ENCODE measurements at regions of chr11 and their contacts with region 1.

Region 1: DNA sequence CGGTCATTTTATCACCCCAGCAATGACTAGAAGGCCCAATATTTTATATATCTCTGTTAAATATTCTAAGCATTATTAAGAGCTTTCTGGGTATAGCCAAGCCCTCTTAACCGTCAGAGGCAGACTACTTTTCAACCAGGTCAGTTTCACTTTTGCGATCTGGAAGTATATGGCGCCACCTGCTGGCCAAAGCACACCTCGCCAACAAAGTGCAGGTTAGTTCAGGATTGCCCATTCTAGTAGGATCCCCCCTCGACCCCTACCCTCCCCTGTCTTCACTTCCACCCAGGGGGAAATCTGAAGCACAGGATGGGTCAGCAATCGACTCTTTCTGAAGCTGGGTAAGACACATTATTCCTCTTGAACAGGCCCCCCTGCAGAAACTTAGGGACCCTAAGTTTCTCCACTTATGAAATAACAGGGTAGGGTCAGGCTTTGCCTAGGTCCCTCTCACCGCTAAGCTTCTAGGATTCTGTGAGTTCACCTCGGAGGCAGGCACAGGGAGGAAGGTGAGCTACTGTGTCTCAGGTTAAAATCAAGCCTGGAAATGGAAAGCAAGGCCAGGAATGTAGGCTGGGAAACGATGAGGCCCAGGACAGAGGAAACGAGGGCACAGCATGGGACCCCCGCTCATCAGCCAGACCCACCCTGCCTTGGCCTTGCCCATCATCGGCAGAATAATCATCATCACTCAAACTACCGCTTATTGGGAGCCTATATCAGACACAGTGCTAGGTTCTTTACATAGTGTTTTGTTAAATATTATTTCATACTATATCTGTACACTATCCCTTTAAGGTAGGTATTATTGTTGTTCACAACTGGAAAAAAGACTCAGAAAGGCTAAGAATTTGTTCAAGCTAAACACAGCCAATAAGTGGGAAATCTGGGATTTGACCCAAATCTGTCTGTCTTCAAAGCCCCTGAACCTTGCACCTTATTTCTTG is 35.6 kb downstream of the KCNJ1 start:
- DNase-seq: peak; percentile 69
- ATAC-seq: peak; percentile 92
- H3K4me3 ChIP-seq: peak overlapping the region; percentile 28; the same call in 1 of the 2 replicates
- H3K27ac ChIP-seq: peak overlapping the region; percentile 60
- H3K4me1 ChIP-seq: peaks cover 27% of the 10 kb centered on the region
- H3K27me3 ChIP-seq: no peaks in the 10 kb centered on the region
- CTCF ChIP-seq: peak; percentile 80 to 91 (median 85); a peak in 5 of 6 replicates
- EP300 ChIP-seq: no peak
- POLR2A ChIP-seq: no peak
- RAD21 ChIP-seq: peak; percentile 93

Region 2: DNA sequence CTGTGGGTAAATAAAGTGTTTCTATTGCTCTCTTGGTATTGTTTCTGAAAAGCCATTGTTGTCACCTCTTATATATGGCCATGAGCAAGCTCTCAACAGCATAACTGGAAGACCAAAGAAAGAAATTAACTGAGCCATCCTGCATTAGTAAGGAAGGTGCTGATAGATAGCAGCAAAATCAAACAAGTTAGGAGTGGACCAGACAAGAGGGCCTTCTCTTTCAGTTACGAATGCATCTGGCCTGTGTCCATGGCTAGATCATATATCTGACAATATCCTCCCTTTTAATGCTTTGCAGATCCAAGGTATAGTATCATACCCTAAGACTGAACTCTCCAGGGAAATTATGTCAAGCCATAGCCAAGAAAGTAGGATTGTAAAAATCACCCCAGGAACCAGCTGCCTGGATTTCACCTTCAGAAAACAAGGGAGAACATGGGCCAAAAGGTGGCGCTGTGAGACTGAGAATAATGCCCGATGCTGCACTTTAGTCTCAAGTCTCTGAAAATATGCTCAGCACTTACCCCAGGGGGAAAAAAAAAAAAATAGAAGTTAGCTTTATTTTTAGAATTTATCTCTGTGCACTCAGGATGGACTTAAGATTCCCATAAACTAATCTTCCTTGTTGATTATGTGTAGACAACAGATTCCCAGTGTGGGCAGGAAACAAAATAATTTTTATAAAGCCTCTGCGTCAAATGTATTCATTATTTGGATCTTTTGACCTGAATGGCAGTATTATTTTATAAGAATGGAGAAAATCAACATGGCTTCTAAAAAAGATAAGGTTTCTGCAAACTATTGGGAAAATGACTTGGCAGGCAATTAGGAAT is 659.2 kb before region 1 on chr11:
- CTCF ChIA-PET with region 1: interaction called, 108 read pairs
- POLR2A ChIA-PET with region 1: interaction called, 3 read pairs
- RAD21 ChIA-PET with region 1: interaction called, 42 read pairs
- SMC1A ChIA-PET with region 1: interaction called, 42 read pairs
- in situ Hi-C with region 1: loop called (anchors 5 kb)
- intact Hi-C with region 1: loop called (anchors 1 kb)
- DNase-seq: peak; percentile 38
- ATAC-seq: peak; percentile 93
- H3K4me3 ChIP-seq: no peak overlapping the region
- H3K27ac ChIP-seq: no peak overlapping the region
- H3K4me1 ChIP-seq: no peaks in the 10 kb centered on the region
- H3K27me3 ChIP-seq: no peaks in the 10 kb centered on the region; a peak in 2 of 4 replicates
- CTCF ChIP-seq: peak; percentile 68 to 91 (median 72)
- EP300 ChIP-seq: no peak
- POLR2A ChIP-seq: no peak
- RAD21 ChIP-seq: peak; percentile 97

Region 3: GRCh38 chr11:128552783-128553661 is 278.4 kb before region 1 on chr11:
- CTCF ChIA-PET with region 1: interaction called, 31 read pairs
- POLR2A ChIA-PET with region 1: interaction called, 3 read pairs
- RAD21 ChIA-PET with region 1: interaction called, 16 read pairs
- SMC1A ChIA-PET with region 1: interaction called, 9 read pairs
- in situ Hi-C with region 1: no loop called
- intact Hi-C with region 1: loop called (anchors 2 kb)
- DNase-seq: peak; percentile 95
- ATAC-seq: peak; percentile 79
- H3K4me3 ChIP-seq: peak overlapping the region; percentile 69
- H3K27ac ChIP-seq: peak overlapping the region; percentile 100
- H3K4me1 ChIP-seq: peaks cover 50% of the 10 kb centered on the region
- H3K27me3 ChIP-seq: no peaks in the 10 kb centered on the region
- CTCF ChIP-seq: no peak
- EP300 ChIP-seq: peak in 1 of 2 experiments; percentile 35; a peak in 2 of 4 replicates
- POLR2A ChIP-seq: peak; percentile 82
- RAD21 ChIP-seq: 0 out of 2 replicates have a peak, but pooled peaks have one; percentile 2

Region 4: GRCh38 chr11:128624269-128625175 is 206.9 kb before region 1 on chr11:
- CTCF ChIA-PET with region 1: interaction called, 177 read pairs
- POLR2A ChIA-PET with region 1: interaction called, 3 read pairs
- RAD21 ChIA-PET with region 1: interaction called, 125 read pairs
- SMC1A ChIA-PET with region 1: interaction called, 146 read pairs
- in situ Hi-C with region 1: loop called (anchors 25 kb)
- intact Hi-C with region 1: no loop called
- DNase-seq: no peak
- ATAC-seq: peak; percentile 77
- H3K4me3 ChIP-seq: no peak overlapping the region
- H3K27ac ChIP-seq: peak overlapping the region; percentile 86
- H3K4me1 ChIP-seq: peaks cover 66% of the 10 kb centered on the region
- H3K27me3 ChIP-seq: no peaks in the 10 kb centered on the region
- CTCF ChIP-seq: no peak
- EP300 ChIP-seq: peak in 1 of 2 experiments; percentile 21; a peak in 1 of 4 replicates
- POLR2A ChIP-seq: no peak
- RAD21 ChIP-seq: no peak

Region 5: GRCh38 chr11:128733440-128734102 is 97.9 kb before region 1 on chr11:
- CTCF ChIA-PET with region 1: interaction called, 12 read pairs
- POLR2A ChIA-PET with region 1: no interaction called
- RAD21 ChIA-PET with region 1: interaction called, 15 read pairs
- SMC1A ChIA-PET with region 1: interaction called, 20 read pairs
- in situ Hi-C with region 1: no loop called
- intact Hi-C with region 1: loop called (anchors 1 kb)
- DNase-seq: no peak
- ATAC-seq: peak; percentile 55
- H3K4me3 ChIP-seq: peak overlapping the region; percentile 24; the same call in 1 of the 2 replicates
- H3K27ac ChIP-seq: peak overlapping the region; percentile 91
- H3K4me1 ChIP-seq: peaks cover 89% of the 10 kb centered on the region
- H3K27me3 ChIP-seq: no peaks in the 10 kb centered on the region
- CTCF ChIP-seq: no peak
- EP300 ChIP-seq: no peak
- POLR2A ChIP-seq: 0 out of 2 replicates have a peak, but pooled peaks have one; percentile 31
- RAD21 ChIP-seq: no peak

Region 6: DNA sequence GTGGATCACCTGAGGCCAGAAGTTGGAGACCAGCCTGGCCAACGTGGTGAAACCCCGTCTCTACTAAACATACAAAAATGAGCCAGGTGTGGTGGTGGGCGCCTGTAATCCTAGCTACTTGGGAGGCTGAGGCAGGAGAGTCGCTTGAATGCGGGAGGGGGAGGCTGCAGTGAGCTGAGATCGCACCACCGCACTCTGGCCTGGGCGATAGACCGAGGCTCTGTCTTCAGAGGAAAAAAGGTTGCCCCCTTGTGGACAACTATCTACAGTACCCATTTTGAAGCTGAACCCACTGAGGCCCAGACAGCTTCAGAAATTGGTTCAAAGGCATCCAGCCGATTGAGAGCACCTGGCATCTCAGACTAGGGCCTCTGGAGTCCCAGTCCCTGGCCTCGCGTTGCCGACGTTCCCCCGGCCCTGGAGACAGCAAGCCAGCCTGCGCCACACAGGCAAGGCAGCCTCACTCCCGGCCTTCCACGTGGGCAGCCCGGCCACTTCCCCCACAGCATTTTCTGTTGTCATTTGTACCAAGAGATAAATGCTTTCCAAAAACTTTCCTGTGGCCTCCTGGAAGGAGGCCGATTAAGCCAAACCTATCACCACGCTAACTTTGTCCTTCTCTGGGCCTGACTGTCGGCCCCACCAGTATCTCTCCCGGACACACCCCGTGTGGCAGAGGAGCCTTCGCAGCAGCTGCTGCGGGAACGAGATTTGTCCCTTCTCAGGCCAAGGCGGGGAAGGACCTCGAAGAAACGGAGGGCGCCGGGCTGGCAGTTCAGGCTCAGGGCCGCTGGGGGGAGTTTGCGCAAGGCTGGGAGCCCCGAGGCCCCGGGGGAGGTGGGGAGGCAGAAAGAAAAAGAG is 54.8 kb before region 1 on chr11:
- CTCF ChIA-PET with region 1: interaction called, 12 read pairs
- POLR2A ChIA-PET with region 1: no interaction called
- RAD21 ChIA-PET with region 1: interaction called, 9 read pairs
- SMC1A ChIA-PET with region 1: interaction called, 12 read pairs
- in situ Hi-C with region 1: no loop called
- intact Hi-C with region 1: no loop called
- DNase-seq: no peak
- ATAC-seq: peak; percentile 88
- H3K4me3 ChIP-seq: no peak overlapping the region
- H3K27ac ChIP-seq: no peak overlapping the region
- H3K4me1 ChIP-seq: no peaks in the 10 kb centered on the region
- H3K27me3 ChIP-seq: no peaks in the 10 kb centered on the region
- CTCF ChIP-seq: peak; percentile 30 to 53 (median 34); a peak in 4 of 6 replicates
- EP300 ChIP-seq: no peak
- POLR2A ChIP-seq: no peak
- RAD21 ChIP-seq: peak; percentile 28; the same call in 1 of the 2 replicates

Region 7: DNA sequence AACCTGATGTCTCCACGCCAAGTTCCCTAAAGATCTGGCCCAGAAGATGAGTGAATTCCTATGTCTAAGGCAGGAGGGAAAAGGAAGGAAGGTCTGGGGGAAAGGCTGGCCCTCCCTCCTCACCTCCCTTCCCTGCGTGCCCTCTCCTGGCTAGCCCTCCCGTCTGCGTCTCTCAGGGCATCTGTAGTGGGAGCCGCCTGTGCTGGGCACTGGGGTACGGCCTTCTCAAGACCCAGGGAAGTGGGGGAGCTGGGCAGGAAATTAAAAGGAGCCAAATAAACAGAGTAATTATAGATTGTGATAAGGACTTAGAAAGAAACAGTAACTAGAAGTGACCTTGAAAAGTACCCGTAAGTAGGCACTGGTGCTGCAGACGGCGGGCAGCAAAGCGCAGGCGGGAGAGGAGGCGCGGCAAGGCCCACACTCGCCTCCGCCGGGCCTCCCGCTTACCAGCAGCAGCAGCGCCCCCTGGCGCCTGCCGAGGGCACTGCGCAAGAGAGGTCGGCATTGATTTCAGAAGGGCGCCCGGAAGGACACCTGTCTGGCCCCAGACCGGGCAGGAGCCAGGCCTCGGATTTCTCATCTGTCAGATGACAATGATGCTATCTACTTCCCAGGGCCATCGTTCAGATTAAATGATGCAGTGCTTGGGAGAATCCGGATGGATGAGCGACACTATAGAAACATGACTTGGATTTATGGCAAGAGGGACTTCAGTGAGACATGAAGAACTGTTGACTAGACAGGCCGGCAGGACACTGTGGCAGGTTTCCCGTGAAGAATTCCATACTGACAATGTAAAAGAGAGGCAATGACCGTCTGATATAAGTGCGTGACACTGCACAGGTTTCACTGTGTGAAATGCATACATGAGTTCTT is 28.4 kb after region 1 on chr11:
- CTCF ChIA-PET with region 1: interaction called, 12 read pairs
- POLR2A ChIA-PET with region 1: no interaction called
- RAD21 ChIA-PET with region 1: interaction called, 7 read pairs
- SMC1A ChIA-PET with region 1: interaction called, 4 read pairs
- in situ Hi-C with region 1: no loop called
- intact Hi-C with region 1: no loop called
- DNase-seq: no peak
- ATAC-seq: peak; percentile 99
- H3K4me3 ChIP-seq: no peak overlapping the region
- H3K27ac ChIP-seq: no peak overlapping the region
- H3K4me1 ChIP-seq: no peaks in the 10 kb centered on the region
- H3K27me3 ChIP-seq: peaks cover 0 to 2% of the 10 kb centered on the region in 2 experiments; a peak in 1 of 4 replicates
- CTCF ChIP-seq: peak; percentile 89 to 94 (median 93); a peak in 5 of 6 replicates
- EP300 ChIP-seq: no peak
- POLR2A ChIP-seq: no peak
- RAD21 ChIP-seq: peak; percentile 71

Region 8: GRCh38 chr11:129023970-129024676 is 192.7 kb after region 1 on chr11:
- CTCF ChIA-PET with region 1: no interaction called
- POLR2A ChIA-PET with region 1: no interaction called
- RAD21 ChIA-PET with region 1: no interaction called
- SMC1A ChIA-PET with region 1: no interaction called
- in situ Hi-C with region 1: no loop called
- intact Hi-C with region 1: no loop called
- DNase-seq: no peak
- ATAC-seq: peak; percentile 36; the same call in 2 of the 3 replicates
- H3K4me3 ChIP-seq: no peak overlapping the region
- H3K27ac ChIP-seq: no peak overlapping the region
- H3K4me1 ChIP-seq: no peaks in the 10 kb centered on the region
- H3K27me3 ChIP-seq: no peaks in the 10 kb centered on the region
- CTCF ChIP-seq: no peak
- EP300 ChIP-seq: no peak
- POLR2A ChIP-seq: no peak
- RAD21 ChIP-seq: no peak

Region 9: DNA sequence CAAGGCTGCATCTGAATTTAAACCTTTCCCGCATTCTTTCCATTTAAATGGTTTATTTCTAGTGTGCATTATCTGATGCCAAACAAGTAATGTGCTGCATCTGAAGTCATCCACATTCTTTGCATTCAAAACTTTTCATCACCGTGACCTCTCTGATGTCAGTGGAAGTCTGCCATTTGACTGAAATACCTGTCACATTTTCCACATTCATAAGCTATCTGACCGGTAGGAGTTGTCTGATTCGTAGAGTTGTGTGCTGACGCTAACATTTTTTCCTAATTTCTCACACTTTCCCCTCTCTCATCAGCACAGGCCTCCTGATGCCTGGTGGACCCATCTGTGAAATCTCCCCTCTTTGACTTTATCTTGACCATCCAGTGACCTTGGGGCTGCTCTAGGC is 464.3 kb after region 1 on chr11:
- CTCF ChIA-PET with region 1: no interaction called
- POLR2A ChIA-PET with region 1: no interaction called
- RAD21 ChIA-PET with region 1: no interaction called
- SMC1A ChIA-PET with region 1: no interaction called
- in situ Hi-C with region 1: no loop called
- intact Hi-C with region 1: no loop called
- DNase-seq: no peak
- ATAC-seq: no peak
- H3K4me3 ChIP-seq: no peak overlapping the region
- H3K27ac ChIP-seq: no peak overlapping the region
- H3K4me1 ChIP-seq: no peaks in the 10 kb centered on the region
- H3K27me3 ChIP-seq: no peaks in the 10 kb centered on the region
- CTCF ChIP-seq: no peak
- EP300 ChIP-seq: no peak
- POLR2A ChIP-seq: no peak
- RAD21 ChIP-seq: no peak

Measured in GM12878 (cell line).